Esophagus squamous epithelium (tissue), 5 donors: ENCODE measurements at regions of chr17 and their contacts with region 1.

Region 1: GRCh38 chr17:73429440-73430164 is 117.8 kb upstream of the CDC42EP4 start:
- DNase-seq: peak; percentile 10
- H3K4me3 ChIP-seq: no peak overlapping the region
- H3K27ac ChIP-seq: no peak overlapping the region
- H3K4me1 ChIP-seq: peaks cover 0 to 11% (median 0%) of the 10 kb centered on the region in 3 donors
- H3K27me3 ChIP-seq: peaks cover 0 to 5% (median 0%) of the 10 kb centered on the region in 4 donors
- CTCF ChIP-seq: peak; percentile 83 to 98 (median 95)
- POLR2A ChIP-seq: no peak

Region 2: GRCh38 chr17:73719588-73720071 is 290.0 kb after region 1 on chr17:
- intact Hi-C with region 1: loop called (anchors 5 kb)
- DNase-seq: no peak
- H3K4me3 ChIP-seq: no peak overlapping the region
- H3K27ac ChIP-seq: no peak overlapping the region
- H3K4me1 ChIP-seq: peaks cover 0 to 13% (median 0%) of the 10 kb centered on the region in 3 donors
- H3K27me3 ChIP-seq: peaks cover 0 to 37% (median 0%) of the 10 kb centered on the region in 4 donors
- CTCF ChIP-seq: no peak
- POLR2A ChIP-seq: no peak

Region 3: GRCh38 chr17:74176546-74177001 is 747.0 kb after region 1 on chr17:
- intact Hi-C with region 1: loop called (anchors 10 kb)
- DNase-seq: no peak
- H3K4me3 ChIP-seq: no peak overlapping the region
- H3K27ac ChIP-seq: no peak overlapping the region
- H3K4me1 ChIP-seq: no peaks in the 10 kb centered on the region
- H3K27me3 ChIP-seq: peaks cover 0 to 75% (median 0%) of the 10 kb centered on the region in 4 donors
- CTCF ChIP-seq: peak; percentile 37 to 83 (median 75)
- POLR2A ChIP-seq: no peak